Activated CD8-positive, alpha-beta T cell treated with anti-CD3 and anti-CD28 coated beads for 36 hours (primary cell): ENCODE measurements at regions of chr1 and their contacts with region 1.

Region 1: DNA sequence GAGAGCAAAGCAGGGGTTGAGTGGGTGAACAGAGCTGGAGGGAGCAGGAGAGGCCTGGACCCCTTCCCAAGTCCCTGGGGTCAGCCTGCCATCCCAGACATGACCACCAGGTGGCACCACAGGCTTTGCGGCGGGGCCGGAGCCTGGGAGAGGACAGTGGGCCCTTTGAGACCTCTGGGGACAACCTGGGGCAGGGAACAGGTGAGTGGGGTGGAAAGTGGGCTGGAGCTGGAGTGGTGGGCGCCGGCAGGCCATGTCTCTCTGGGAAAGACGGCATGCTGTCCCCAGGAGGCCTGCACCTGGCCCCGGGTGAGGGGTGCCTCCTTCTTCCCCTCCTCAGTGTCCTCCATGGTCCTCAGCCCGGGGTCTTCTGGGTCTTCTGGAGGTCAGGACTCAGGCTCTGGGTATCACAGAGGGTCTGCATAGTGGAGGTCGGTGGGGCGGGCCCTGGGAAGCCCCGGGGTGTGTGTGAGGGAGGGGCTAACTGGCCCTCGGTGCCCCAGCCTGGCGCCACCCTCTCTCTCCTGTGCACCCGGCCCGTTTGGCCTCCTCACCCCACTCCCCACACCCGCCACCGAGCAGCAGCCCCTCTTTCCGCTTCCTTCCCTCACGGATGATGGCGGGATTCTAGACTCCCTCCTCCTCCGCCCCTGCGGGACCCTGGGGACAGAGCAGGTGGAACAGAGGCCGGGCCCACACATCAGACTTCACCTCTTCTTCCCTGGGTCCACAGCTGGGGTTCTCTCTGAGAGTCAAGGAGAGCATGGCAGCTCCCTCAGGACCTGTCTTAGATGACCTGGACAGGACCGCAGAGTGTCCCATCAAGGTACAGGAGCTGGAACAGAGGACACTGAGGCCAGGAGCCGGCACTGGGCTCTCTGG is 28.4 kb upstream of the PKP1 start:
- DNase-seq: peak; percentile 79
- ATAC-seq: peak; percentile 88
- H3K4me3 Mint-ChIP-seq: no peak overlapping the region
- H3K27ac Mint-ChIP-seq: no peak overlapping the region
- H3K4me1 Mint-ChIP-seq: no peaks in the 10 kb centered on the region
- H3K27me3 Mint-ChIP-seq: peaks cover 3% of the 10 kb centered on the region
- CTCF ChIP-seq: peak; percentile 98

Region 2: DNA sequence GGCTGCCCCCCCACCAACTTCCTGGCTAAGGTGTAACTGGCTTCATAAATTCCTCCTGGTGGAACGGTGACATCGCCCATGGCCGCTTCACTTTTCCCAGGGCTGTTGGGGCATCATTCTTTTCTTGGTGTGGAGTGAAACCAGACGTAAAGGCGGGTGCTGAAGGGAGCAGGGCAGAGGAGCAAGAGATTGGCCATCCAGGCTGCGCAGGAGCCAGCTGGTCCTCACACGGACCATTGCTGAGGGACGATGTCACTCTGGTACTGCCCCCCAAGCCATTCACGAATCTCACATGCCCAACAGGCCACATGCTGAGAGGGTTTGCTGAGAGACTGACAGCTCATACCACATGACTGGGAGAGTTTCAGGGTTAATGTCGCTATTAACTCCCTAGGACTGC is 17.9 kb after region 1 on chr1:
- CTCF ChIA-PET with region 1: no interaction called
- POLR2A ChIA-PET with region 1: no interaction called
- intact Hi-C with region 1: no loop called
- DNase-seq: no peak
- ATAC-seq: no peak
- H3K4me3 Mint-ChIP-seq: no peak overlapping the region
- H3K27ac Mint-ChIP-seq: no peak overlapping the region
- H3K4me1 Mint-ChIP-seq: no peaks in the 10 kb centered on the region
- H3K27me3 Mint-ChIP-seq: peaks cover 5% of the 10 kb centered on the region
- CTCF ChIP-seq: no peak

Region 3: GRCh38 chr1:201282931-201283829 is 28.3 kb after region 1 on chr1 and contains the start of gene PKP1:
- CTCF ChIA-PET with region 1: interaction called, 14 read pairs
- POLR2A ChIA-PET with region 1: no interaction called
- intact Hi-C with region 1: no loop called
- DNase-seq: peak; percentile 63
- ATAC-seq: peak; percentile 96
- H3K4me3 Mint-ChIP-seq: peak within 1 kb of the TSS; percentile 31
- H3K27ac Mint-ChIP-seq: no peak within 1 kb of the TSS
- H3K4me1 Mint-ChIP-seq: peaks cover 5% of the 10 kb centered on the region
- H3K27me3 Mint-ChIP-seq: peaks cover 19% of the 10 kb centered on the region
- CTCF ChIP-seq: no peak
- total RNA-seq, gene PKP1: not detected

Region 4: DNA sequence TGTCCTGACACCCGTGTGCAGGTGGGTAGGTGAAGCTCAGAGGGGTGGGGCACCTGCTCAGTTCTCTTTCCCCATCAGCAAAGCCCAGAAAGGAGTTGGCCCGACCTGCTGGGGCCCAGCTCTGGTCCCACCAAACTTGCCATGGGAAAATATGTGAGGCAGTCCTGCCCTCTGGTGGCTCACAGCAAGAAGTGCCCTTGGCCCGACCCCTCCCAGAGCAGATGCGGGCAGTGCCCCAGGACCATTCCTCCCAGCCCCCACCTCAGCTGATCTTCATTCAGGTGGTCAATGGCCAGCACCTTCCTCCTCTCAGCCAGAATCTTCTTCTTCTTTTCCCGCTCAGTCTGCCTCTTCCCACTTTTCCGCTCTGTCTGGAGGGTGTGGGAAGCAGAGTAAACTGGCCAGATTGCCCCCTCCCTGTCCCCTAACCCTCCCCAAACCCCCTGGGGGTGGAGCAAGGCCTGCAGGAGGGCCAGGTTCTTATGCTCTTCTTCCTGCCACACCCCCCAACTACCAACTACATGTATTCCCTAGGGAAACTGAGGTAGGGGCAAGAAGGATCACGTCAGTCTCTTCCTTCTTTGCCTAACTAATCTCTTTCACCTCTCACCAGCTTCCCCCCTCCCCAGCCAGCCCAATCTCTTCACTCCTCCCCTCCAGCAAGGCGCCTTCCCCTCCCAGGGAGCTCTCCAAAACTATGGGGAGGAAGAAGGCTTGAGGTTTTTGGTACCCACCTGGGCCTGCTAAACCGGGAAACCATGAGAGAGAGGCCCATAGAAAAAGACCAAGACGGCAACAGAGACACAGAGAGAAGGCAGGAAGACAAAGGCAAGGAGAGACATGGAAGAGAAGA is 107.0 kb after region 1 on chr1:
- CTCF ChIA-PET with region 1: interaction called, 29 read pairs
- POLR2A ChIA-PET with region 1: no interaction called
- intact Hi-C with region 1: loop called (anchors 5 kb)
- DNase-seq: peak; percentile 51
- ATAC-seq: peak; percentile 82
- H3K4me3 Mint-ChIP-seq: no peak overlapping the region
- H3K27ac Mint-ChIP-seq: no peak overlapping the region
- H3K4me1 Mint-ChIP-seq: no peaks in the 10 kb centered on the region
- H3K27me3 Mint-ChIP-seq: peaks cover 3% of the 10 kb centered on the region
- CTCF ChIP-seq: peak; percentile 70

Region 5: GRCh38 chr1:201408176-201408833 is 153.4 kb after region 1 on chr1:
- CTCF ChIA-PET with region 1: interaction called, 18 read pairs
- POLR2A ChIA-PET with region 1: no interaction called
- intact Hi-C with region 1: no loop called
- DNase-seq: peak; percentile 88
- ATAC-seq: peak; percentile 96
- H3K4me3 Mint-ChIP-seq: no peak overlapping the region
- H3K27ac Mint-ChIP-seq: no peak overlapping the region
- H3K4me1 Mint-ChIP-seq: no peaks in the 10 kb centered on the region
- H3K27me3 Mint-ChIP-seq: peaks cover 5% of the 10 kb centered on the region
- CTCF ChIP-seq: peak; percentile 95

Region 6: DNA sequence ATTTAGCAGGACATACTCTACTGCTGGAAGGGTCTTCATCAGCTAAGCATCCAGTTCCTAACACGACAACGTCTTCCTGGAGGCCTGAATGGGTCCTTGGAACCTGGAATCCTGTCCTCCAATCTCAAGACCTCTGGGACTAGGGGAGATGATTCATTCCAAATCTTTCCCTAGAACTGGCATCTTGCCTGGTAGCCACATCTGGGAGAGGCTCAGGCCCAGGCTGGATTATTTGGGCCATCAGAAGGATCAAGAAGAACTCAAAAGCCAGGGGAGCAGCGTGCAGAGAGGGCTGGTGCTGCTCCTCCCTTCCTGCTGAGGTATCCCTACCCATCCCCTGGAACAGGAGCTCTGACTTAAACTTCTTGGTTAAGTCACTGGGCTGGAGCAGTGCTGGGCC is 216.9 kb after region 1 on chr1:
- CTCF ChIA-PET with region 1: no interaction called
- POLR2A ChIA-PET with region 1: no interaction called
- intact Hi-C with region 1: no loop called
- DNase-seq: no peak
- ATAC-seq: no peak
- H3K4me3 Mint-ChIP-seq: no peak overlapping the region
- H3K27ac Mint-ChIP-seq: no peak overlapping the region
- H3K4me1 Mint-ChIP-seq: peaks cover 3% of the 10 kb centered on the region
- H3K27me3 Mint-ChIP-seq: peaks cover 46% of the 10 kb centered on the region
- CTCF ChIP-seq: no peak